HEK293 (cell line): ENCODE measurements at regions of chr12 and their contacts with region 1.

Region 1: DNA sequence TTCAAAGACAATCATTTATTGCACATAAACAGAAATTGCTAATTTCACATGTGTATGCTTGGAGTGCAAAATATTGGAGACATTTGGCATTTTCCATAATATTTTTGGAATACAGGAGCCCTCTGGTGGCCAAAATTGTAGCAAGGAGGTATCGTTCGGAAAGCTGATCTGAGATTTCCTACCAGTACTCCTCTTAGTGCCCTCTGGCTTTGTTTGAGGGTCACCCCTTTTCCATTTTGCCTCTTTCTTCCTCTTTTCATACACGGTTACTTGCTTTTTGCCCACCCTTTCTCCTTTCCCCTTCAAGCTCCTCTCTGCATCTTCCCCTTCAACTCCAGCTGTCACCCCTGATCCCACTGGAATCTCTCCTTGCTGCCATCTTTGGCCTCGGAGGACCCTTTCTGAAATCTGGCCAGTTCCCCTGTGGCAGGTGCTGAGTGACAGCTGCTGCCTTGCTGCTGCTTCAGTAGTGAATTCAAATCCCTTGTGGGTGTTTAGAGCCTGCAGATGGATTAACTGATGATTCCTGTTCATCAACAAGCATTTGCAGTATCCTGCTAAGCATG is 164.6 kb upstream of the PARP11 start:
- H3K4me3 ChIP-seq: no peak overlapping the region
- H3K27ac ChIP-seq: no peak overlapping the region
- H3K4me1 ChIP-seq: no peaks in the 10 kb centered on the region; the same call in 1 of the 2 replicates
- CTCF ChIP-seq: peak; percentile 56

Region 2: DNA sequence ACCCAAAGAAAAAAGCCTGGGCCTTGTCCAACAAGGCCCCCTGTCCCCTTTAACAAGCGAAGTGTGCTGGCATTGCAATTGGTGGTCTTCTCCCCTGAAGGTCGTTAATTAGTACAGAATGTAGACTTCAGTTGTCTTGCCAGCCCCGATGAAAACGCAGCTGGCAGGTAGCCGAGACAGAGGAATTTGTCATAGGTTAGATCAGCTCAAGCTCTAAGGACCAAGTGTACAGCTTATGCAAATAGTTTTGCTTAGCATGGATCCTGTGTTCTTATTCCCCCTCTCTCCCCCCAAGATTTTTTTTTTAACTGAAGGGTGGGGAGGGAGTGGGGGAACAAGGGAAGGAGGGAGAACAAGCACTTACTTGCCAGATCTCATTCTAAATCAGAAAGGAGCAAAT is 106.1 kb before region 1 on chr12:
- CTCF ChIA-PET with region 1: no interaction called
- POLR2A ChIA-PET with region 1: no interaction called
- H3K4me3 ChIP-seq: no peak overlapping the region
- H3K27ac ChIP-seq: no peak overlapping the region
- H3K4me1 ChIP-seq: no peaks in the 10 kb centered on the region
- CTCF ChIP-seq: no peak

Region 3: DNA sequence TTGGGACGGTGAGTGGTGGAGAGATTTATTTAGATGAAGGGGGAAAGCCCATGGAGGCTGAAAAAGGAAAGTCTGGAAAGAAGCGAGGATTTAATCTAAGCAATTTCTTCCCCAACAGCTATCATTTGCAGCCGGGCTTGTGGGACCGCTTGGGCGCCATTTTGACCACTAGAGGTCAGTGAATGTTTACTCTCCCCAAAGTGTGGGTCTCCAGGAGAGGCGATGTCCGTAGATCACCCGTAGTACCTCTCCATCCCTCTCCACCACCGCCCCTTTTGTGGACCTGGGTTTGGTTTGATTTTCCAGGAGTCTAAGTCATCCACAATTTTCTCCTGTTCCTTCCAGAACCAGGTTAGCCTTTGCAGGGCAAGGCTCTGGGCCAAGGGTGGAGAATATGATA is 73.4 kb before region 1 on chr12:
- CTCF ChIA-PET with region 1: interaction called, 27 read pairs
- POLR2A ChIA-PET with region 1: no interaction called
- H3K4me3 ChIP-seq: no peak overlapping the region
- H3K27ac ChIP-seq: no peak overlapping the region
- H3K4me1 ChIP-seq: no peaks in the 10 kb centered on the region
- CTCF ChIP-seq: no peak